ENCODE measurements at regions of chr15 and their contacts with region 1.

Region 1: GRCh38 chr15:37100109-37100965 is at the start of gene MEIS2:
- DNase-seq: peak; percentile 67
- H3K4me3 Mint-ChIP-seq: peak within 1 kb of the TSS; percentile 86
- H3K27ac Mint-ChIP-seq: peak within 1 kb of the TSS; percentile 50
- H3K4me1 Mint-ChIP-seq: peaks cover 43% of the 10 kb centered on the region
- H3K27me3 Mint-ChIP-seq: peaks cover 80% of the 10 kb centered on the region
- total RNA-seq, gene MEIS2: not detected

Region 2: GRCh38 chr15:36501063-36501678 is 599.2 kb before region 1 on chr15:
- CTCF ChIA-PET with region 1: no interaction called
- POLR2A ChIA-PET with region 1: no interaction called
- intact Hi-C with region 1: loop called (anchors 10 kb)
- DNase-seq: no peak
- H3K4me3 Mint-ChIP-seq: no peak overlapping the region
- H3K27ac Mint-ChIP-seq: no peak overlapping the region
- H3K4me1 Mint-ChIP-seq: no peaks in the 10 kb centered on the region
- H3K27me3 Mint-ChIP-seq: peaks cover 10% of the 10 kb centered on the region

Region 3: GRCh38 chr15:36579792-36580431 is 520.4 kb before region 1 on chr15:
- CTCF ChIA-PET with region 1: no interaction called
- POLR2A ChIA-PET with region 1: no interaction called
- intact Hi-C with region 1: loop called (anchors 2 kb)
- DNase-seq: peak; percentile 42
- H3K4me3 Mint-ChIP-seq: peak overlapping the region; percentile 79
- H3K27ac Mint-ChIP-seq: no peak overlapping the region
- H3K4me1 Mint-ChIP-seq: peaks cover 25% of the 10 kb centered on the region
- H3K27me3 Mint-ChIP-seq: no peaks in the 10 kb centered on the region

Region 4: GRCh38 chr15:37081983-37082382 is 18.4 kb before region 1 on chr15:
- CTCF ChIA-PET with region 1: no interaction called
- POLR2A ChIA-PET with region 1: no interaction called
- intact Hi-C with region 1: no loop called
- DNase-seq: no peak
- H3K4me3 Mint-ChIP-seq: no peak overlapping the region
- H3K27ac Mint-ChIP-seq: no peak overlapping the region
- H3K4me1 Mint-ChIP-seq: no peaks in the 10 kb centered on the region
- H3K27me3 Mint-ChIP-seq: peaks cover 15% of the 10 kb centered on the region

Region 5: DNA sequence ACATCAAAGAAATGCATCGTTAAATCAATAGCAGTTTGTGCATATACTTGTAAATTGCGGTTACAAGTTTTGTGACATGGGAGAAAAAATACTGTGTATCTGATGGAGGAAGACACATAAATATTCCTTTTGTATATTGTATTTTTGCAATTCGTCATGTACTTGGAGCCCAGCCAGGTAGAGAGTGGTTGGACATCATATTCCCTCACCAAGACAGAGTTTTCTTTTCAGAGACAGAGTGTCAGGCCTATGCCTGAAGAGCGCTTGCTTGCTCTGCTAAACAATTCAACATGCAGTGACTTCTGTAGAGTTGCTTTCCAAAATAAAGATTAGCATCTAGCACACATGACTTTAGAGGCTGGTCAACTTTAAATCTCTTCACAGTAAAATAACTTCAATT is 24.8 kb after region 1 on chr15:
- CTCF ChIA-PET with region 1: no interaction called
- POLR2A ChIA-PET with region 1: no interaction called
- intact Hi-C with region 1: no loop called
- DNase-seq: no peak
- H3K4me3 Mint-ChIP-seq: no peak overlapping the region
- H3K27ac Mint-ChIP-seq: no peak overlapping the region
- H3K4me1 Mint-ChIP-seq: no peaks in the 10 kb centered on the region
- H3K27me3 Mint-ChIP-seq: peaks cover 11% of the 10 kb centered on the region